ENCODE measurements at regions of chr17 and their contacts with region 1.

Region 1: DNA sequence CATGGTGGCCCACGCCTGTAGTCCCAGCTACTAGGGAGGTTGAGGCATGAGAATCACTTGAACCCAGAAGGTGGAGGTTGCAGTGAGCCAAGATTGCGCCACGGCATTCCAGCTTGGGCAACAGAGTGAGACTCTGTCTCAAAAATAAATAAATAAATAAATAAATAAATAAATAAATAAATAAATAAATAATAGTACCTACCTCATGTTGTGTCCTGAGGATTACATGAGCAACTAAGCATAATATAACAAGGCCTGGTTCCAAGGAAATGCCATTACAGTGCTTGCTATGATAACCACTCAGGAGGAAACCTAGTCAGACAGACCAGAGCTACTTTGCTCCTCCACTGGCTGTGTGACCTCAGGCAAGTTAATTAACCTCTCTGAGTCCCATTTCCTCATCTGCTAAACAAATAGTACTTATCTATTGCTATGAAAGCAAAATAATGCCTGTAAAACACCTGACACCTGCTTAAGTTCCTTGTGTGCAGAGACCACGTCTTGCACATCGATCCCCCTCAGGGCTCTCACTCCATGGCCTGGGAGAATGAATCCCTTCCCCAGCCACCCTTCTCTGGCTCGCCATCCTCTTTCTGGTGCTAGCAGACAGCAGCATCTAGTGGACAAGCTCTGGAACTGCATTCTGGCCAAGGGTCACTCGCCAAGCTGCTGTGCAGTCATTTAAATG is 7.5 kb downstream of the EPOP start:
- DNase-seq: peak; percentile 79
- ATAC-seq: peak; percentile 50
- H3K4me3 ChIP-seq: no peak overlapping the region
- H3K27ac ChIP-seq: no peak overlapping the region
- H3K4me1 ChIP-seq: peaks cover 75% of the 10 kb centered on the region
- H3K27me3 ChIP-seq: peaks cover 7 to 28% of the 10 kb centered on the region in 2 experiments; a peak in 4 of 5 replicates
- CTCF ChIP-seq: peak; percentile 99
- EP300 ChIP-seq: no peak
- POLR2A ChIP-seq: no peak
- RAD21 ChIP-seq: peak; percentile 100

Region 2: GRCh38 chr17:38428112-38428642 is 239.1 kb before region 1 on chr17 and contains the start of gene ARHGAP23:
- CTCF ChIA-PET with region 1: no interaction called
- POLR2A ChIA-PET with region 1: no interaction called
- in situ Hi-C with region 1: loop called (anchors 10 kb)
- intact Hi-C with region 1: loop called (anchors 10 kb)
- DNase-seq: no peak
- ATAC-seq: peak; percentile 50
- H3K4me3 ChIP-seq: peak within 1 kb of the TSS; percentile 4 to 63 (median 11); a peak in 5 of 6 replicates
- H3K27ac ChIP-seq: no peak within 1 kb of the TSS
- H3K4me1 ChIP-seq: peaks cover 20% of the 10 kb centered on the region
- H3K27me3 ChIP-seq: peaks cover 10 to 74% of the 10 kb centered on the region in 2 experiments
- CTCF ChIP-seq: no peak
- EP300 ChIP-seq: no peak
- POLR2A ChIP-seq: no peak
- RAD21 ChIP-seq: no peak
- total RNA-seq, gene ARHGAP23: not detected in 2 replicates

Region 3: GRCh38 chr17:38498186-38498752 is 169.0 kb before region 1 on chr17:
- CTCF ChIA-PET with region 1: interaction called, 53 read pairs
- POLR2A ChIA-PET with region 1: interaction called, 3 read pairs
- in situ Hi-C with region 1: loop called (anchors 5 kb)
- intact Hi-C with region 1: no loop called
- DNase-seq: no peak
- ATAC-seq: no peak
- H3K4me3 ChIP-seq: no peak overlapping the region
- H3K27ac ChIP-seq: no peak overlapping the region
- H3K4me1 ChIP-seq: no peaks in the 10 kb centered on the region
- H3K27me3 ChIP-seq: peaks cover 0 to 22% of the 10 kb centered on the region in 2 experiments; a peak in 3 of 5 replicates
- CTCF ChIP-seq: peak; percentile 37
- EP300 ChIP-seq: no peak
- POLR2A ChIP-seq: no peak
- RAD21 ChIP-seq: no peak

Region 4: DNA sequence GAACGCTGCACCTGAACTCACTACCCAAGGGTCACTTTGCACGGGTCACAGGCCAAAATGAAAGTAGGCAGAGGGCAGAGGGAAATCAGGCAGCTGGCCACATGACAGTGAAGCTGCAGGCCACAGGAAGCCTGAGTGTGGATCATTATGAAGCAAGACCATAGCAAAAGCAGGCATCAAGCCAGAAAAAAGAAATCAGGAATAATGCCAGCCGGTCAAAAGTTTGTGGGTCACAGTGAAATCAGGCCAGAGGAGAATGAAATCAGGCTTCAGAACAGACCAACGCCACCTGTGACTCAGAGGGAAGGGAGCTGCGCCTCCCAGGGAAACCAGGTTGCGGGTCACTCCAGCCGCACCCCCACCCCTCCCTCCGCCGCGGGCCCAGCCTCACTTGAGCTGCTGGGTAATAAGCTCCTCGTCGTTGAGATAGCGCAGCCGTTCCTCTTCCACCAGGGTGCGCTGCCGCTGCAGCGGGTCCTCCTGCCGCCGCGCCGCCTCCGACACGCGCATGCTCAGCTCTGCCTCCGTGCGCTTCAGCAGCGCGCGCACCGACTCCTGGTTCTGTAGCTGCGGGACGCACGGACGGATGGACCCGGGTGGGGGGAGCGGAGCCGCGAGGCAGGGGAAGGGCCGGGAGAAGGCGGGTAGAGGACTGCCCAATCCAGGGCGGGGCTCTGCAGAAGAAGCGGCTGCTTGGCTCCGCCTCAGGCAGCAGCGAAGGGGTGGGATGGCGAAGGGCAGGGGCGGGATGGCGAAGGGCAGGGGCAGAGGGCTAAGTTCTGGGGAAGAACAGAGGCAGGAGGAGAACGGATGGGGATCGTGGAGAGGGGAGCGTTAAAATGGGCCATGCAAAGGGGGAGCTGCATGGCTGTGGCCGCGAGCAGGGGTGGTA is 109.2 kb before region 1 on chr17:
- CTCF ChIA-PET with region 1: interaction called, 18 read pairs
- POLR2A ChIA-PET with region 1: interaction called, 19 read pairs
- in situ Hi-C with region 1: loop called (anchors 5 kb)
- intact Hi-C with region 1: loop called (anchors 1 kb)
- DNase-seq: peak; percentile 89
- ATAC-seq: peak; percentile 79
- H3K4me3 ChIP-seq: peak overlapping the region; percentile 19 to 67 (median 51); a peak in 5 of 6 replicates
- H3K27ac ChIP-seq: no peak overlapping the region
- H3K4me1 ChIP-seq: peaks cover 39% of the 10 kb centered on the region
- H3K27me3 ChIP-seq: peaks cover 0 to 2% of the 10 kb centered on the region in 2 experiments; a peak in 1 of 5 replicates
- CTCF ChIP-seq: peak; percentile 100
- EP300 ChIP-seq: no peak
- POLR2A ChIP-seq: no peak
- RAD21 ChIP-seq: peak; percentile 99

Region 5: GRCh38 chr17:38605888-38606645 is 61.2 kb before region 1 on chr17 and contains the start of gene SRCIN1:
- CTCF ChIA-PET with region 1: interaction called, 73 read pairs
- POLR2A ChIA-PET with region 1: interaction called, 28 read pairs
- in situ Hi-C with region 1: no loop called
- intact Hi-C with region 1: no loop called
- DNase-seq: peak; percentile 57
- ATAC-seq: peak; percentile 42
- H3K4me3 ChIP-seq: peak within 1 kb of the TSS; percentile 76 to 84 (median 83)
- H3K27ac ChIP-seq: peak within 1 kb of the TSS; percentile 88
- H3K4me1 ChIP-seq: peaks cover 89% of the 10 kb centered on the region
- H3K27me3 ChIP-seq: no peaks in the 10 kb centered on the region
- CTCF ChIP-seq: peak; percentile 95
- EP300 ChIP-seq: 0 out of 4 replicates have a peak, but pooled peaks have one; percentile 28 to 30
- POLR2A ChIP-seq: peak; percentile 45 to 62; a peak in 3 of 4 replicates
- RAD21 ChIP-seq: peak; percentile 100
- total RNA-seq, gene SRCIN1: 0.90 and 1.2 TPM in 2 replicates

Region 6: GRCh38 chr17:38815576-38816193 is 148.4 kb after region 1 on chr17:
- CTCF ChIA-PET with region 1: no interaction called
- POLR2A ChIA-PET with region 1: no interaction called
- in situ Hi-C with region 1: no loop called
- intact Hi-C with region 1: no loop called
- DNase-seq: no peak
- ATAC-seq: peak; percentile 34; the same call in 2 of the 3 replicates
- H3K4me3 ChIP-seq: no peak overlapping the region
- H3K27ac ChIP-seq: no peak overlapping the region
- H3K4me1 ChIP-seq: no peaks in the 10 kb centered on the region
- H3K27me3 ChIP-seq: no peaks in the 10 kb centered on the region
- CTCF ChIP-seq: no peak
- EP300 ChIP-seq: no peak
- POLR2A ChIP-seq: no peak
- RAD21 ChIP-seq: no peak